H1 (cell line): ENCODE measurements at regions of chr14 and their contacts with region 1.

Region 1: DNA sequence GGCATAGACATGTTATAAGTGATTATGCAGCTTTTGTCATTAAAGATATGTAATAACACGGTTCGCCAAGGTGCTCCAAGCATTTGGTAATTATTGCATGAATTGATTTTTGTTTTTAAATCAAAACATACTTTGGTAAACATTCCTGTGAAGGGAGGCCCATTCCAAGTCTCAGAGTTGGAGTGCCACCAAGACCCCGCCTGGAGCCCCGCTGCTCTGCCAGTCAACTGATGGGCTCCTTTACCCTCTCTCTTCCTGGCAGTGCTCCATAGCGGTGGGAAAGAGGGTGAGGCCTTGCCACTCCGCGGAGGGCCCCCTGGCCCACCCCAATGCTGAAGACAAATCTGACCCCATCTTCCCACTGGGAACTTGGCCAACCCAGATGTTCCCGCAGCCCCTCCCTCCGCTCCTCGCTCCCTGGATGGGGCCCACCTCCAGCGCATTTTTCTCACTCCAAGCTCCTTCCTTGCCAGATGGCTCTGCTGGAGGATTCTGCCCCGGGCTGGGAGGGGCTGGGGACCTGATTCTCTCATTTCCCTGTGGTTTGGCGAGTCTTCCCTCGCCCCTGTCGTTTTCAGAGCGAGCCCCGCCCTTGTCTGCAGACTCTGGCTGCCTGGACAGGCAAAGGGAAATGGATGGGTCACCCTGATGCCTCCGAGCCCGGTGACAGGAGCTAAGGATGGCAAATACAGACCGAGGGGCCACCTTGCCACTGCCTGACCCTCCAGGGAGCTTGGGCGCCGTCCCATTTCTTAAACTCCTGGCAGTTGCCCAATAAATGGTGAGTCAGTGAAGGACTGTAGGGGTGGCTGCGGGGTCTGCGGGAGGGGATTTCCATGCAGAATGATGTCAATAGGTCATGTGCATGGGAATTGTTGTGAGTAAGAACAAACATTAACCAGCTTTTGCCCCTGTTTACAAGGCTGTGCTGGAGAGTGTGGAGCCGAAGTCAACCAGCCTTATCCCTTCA is 9.2 kb upstream of the PAPLN start:
- DNase-seq: no peak
- H3K4me3 ChIP-seq: no peak overlapping the region
- H3K27ac ChIP-seq: no peak overlapping the region
- H3K4me1 ChIP-seq: peaks cover 9 to 21% (median 11%) of the 10 kb centered on the region in 4 experiments
- H3K27me3 ChIP-seq: no peaks in the 10 kb centered on the region
- CTCF ChIP-seq: no peak
- EP300 ChIP-seq: no peak
- POLR2A ChIP-seq: no peak
- RAD21 ChIP-seq: no peak

Region 2: DNA sequence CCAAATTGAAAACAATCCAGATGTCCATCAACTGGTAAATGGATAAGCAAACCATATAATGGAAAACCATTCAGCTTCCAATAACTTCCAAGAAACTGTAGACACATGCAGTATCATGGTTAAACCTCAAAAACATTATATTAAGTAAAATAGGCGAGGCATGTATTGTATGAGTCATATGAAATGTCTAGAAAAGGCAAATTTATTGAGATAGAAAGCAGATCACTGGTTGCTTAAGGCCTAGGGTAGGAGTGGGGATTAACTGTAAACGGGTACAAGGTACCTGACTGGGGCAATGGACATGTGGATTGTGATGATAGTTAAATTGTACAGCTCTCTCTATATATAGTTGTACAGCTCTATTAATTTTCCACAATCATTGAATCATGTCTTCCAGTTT is 12.1 kb before region 1 on chr14:
- CTCF ChIA-PET with region 1: interaction called, 17 read pairs
- POLR2A ChIA-PET with region 1: interaction called, 4 read pairs
- DNase-seq: no peak
- H3K4me3 ChIP-seq: no peak overlapping the region
- H3K27ac ChIP-seq: no peak overlapping the region
- H3K4me1 ChIP-seq: no peaks in the 10 kb centered on the region
- H3K27me3 ChIP-seq: no peaks in the 10 kb centered on the region
- CTCF ChIP-seq: no peak
- EP300 ChIP-seq: no peak
- POLR2A ChIP-seq: no peak
- RAD21 ChIP-seq: no peak

Region 3: DNA sequence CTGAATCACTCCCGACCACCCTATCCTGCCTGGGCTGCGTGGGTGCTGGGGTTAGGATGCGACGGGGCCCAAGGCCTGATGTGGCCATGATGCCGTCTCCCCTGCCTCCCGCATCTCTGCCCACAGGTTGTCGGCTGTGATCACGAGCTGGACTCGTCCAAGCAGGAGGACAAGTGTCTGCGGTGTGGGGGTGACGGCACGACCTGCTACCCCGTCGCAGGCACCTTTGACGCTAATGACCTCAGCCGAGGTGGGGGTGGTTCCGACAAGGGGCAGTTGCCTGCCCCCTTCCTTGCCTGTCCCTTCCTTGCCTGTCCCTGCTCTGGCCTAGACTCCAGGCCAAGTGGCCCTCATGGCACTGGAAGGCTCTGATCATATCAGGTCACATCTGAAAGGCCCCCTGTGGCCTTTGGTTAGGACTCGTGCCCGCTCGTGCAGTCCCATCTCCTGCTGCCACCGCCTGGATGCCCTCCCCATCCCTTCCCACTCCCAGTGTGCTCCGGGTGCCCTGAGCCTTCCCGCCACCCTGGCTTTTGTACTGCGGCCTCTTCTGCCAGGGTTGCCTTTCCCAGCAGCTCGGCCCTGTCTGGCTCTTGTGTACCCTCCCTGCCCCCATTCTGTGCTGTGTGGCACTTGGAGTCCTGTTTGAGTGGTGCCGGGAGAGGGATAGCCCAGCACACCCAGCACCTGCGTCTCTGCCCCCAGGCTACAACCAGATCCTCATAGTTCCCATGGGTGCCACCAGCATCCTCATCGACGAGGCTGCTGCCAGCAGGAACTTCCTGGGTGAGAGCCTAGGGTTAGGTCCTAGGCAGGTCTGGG is 22.9 kb after region 1 on chr14:
- CTCF ChIA-PET with region 1: interaction called, 10 read pairs
- POLR2A ChIA-PET with region 1: interaction called, 3 read pairs
- DNase-seq: no peak
- H3K4me3 ChIP-seq: no peak overlapping the region
- H3K27ac ChIP-seq: no peak overlapping the region
- H3K4me1 ChIP-seq: no peaks in the 10 kb centered on the region; a peak in 1 of 7 replicates
- H3K27me3 ChIP-seq: no peaks in the 10 kb centered on the region
- CTCF ChIP-seq: no peak
- EP300 ChIP-seq: no peak
- POLR2A ChIP-seq: no peak
- RAD21 ChIP-seq: no peak

Region 4: GRCh38 chr14:73269729-73270531 is 41.8 kb after region 1 on chr14:
- CTCF ChIA-PET with region 1: interaction called, 46 read pairs
- POLR2A ChIA-PET with region 1: interaction called, 6 read pairs
- DNase-seq: no peak
- H3K4me3 ChIP-seq: peak overlapping the region in 2 of 4 experiments; percentile 6 to 43; a peak in 4 of 8 replicates
- H3K27ac ChIP-seq: no peak overlapping the region
- H3K4me1 ChIP-seq: peaks cover 0 to 6% (median 3%) of the 10 kb centered on the region in 4 experiments; a peak in 5 of 7 replicates
- H3K27me3 ChIP-seq: peaks cover 0 to 4% (median 0%) of the 10 kb centered on the region in 4 experiments; a peak in 1 of 7 replicates
- CTCF ChIP-seq: no peak
- EP300 ChIP-seq: no peak
- POLR2A ChIP-seq: no peak; a peak in 1 of 3 replicates
- RAD21 ChIP-seq: no peak

Region 5: GRCh38 chr14:73290279-73290678 is 62.2 kb after region 1 on chr14:
- CTCF ChIA-PET with region 1: interaction called, 50 read pairs
- POLR2A ChIA-PET with region 1: interaction called, 3 read pairs
- DNase-seq: no peak
- H3K4me3 ChIP-seq: no peak overlapping the region
- H3K27ac ChIP-seq: no peak overlapping the region
- H3K4me1 ChIP-seq: peaks cover 3 to 28% (median 13%) of the 10 kb centered on the region in 4 experiments; a peak in 5 of 7 replicates
- H3K27me3 ChIP-seq: no peaks in the 10 kb centered on the region
- CTCF ChIP-seq: no peak
- EP300 ChIP-seq: no peak
- POLR2A ChIP-seq: no peak
- RAD21 ChIP-seq: no peak